GM12878 (cell line): ENCODE measurements at regions of chr4 and their contacts with region 1.

Region 1: DNA sequence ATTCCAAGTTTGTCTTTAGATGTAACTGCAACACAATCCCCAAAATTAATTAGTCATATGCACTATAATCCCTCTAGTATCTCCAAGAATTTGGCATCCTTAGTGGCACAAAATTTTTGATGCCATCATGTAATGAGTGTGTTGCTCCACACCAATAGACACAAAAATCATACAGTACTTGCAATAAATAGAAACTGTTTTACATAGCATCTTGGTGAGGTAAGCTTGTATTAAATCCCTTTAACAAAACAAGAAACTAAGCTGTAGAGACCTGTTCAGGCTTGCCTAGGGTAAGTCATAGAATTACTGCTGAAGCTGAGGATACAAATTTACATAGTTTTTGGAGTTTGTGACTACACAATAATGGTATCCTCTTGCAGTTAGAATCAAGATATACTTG is 64.5 kb upstream of the PRSS12 start:
- DNase-seq: no peak
- ATAC-seq: peak; percentile 79
- H3K4me3 ChIP-seq: no peak overlapping the region
- H3K27ac ChIP-seq: no peak overlapping the region
- H3K4me1 ChIP-seq: no peaks in the 10 kb centered on the region
- H3K27me3 ChIP-seq: no peaks in the 10 kb centered on the region
- CTCF ChIP-seq: no peak
- EP300 ChIP-seq: no peak
- POLR2A ChIP-seq: no peak
- RAD21 ChIP-seq: no peak

Region 2: DNA sequence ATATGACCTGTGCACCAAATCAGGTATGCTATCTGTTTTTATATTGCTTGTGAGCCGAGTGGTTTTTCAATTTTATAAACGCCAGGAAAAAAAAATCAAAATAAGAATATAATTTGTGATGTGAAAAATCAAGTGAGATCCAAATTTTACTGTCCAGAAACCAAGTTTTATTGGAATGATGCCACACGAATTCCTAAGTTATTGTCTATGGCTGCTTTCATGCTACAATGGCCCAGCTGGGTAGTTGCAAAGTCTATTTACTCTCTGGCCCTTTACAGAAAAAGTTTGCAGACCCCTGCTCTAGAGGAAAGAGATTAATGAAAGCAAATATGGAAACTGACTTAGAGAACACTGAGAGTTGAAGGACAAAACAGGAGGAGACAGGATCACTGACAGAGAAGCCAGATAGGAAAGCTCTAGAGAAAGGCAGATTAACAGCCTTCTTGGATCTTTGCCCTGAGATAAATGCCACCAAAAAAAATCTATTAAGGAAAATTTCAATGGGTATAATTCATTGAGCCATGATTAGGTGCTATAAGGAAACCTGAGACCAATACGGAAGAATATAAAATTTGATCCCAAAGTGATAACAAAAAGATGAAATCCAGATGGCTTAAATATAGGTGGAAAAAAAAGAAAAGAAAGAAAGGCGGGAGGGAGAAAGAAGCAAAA is 94.4 kb before region 1 on chr4:
- CTCF ChIA-PET with region 1: no interaction called
- POLR2A ChIA-PET with region 1: no interaction called
- RAD21 ChIA-PET with region 1: no interaction called
- SMC1A ChIA-PET with region 1: no interaction called
- in situ Hi-C with region 1: no loop called
- intact Hi-C with region 1: no loop called
- DNase-seq: no peak
- ATAC-seq: no peak
- H3K4me3 ChIP-seq: no peak overlapping the region
- H3K27ac ChIP-seq: no peak overlapping the region
- H3K4me1 ChIP-seq: no peaks in the 10 kb centered on the region
- H3K27me3 ChIP-seq: no peaks in the 10 kb centered on the region
- CTCF ChIP-seq: no peak
- EP300 ChIP-seq: no peak
- POLR2A ChIP-seq: no peak
- RAD21 ChIP-seq: no peak

Region 3: GRCh38 chr4:118398226-118399090 is 18.9 kb before region 1 on chr4:
- CTCF ChIA-PET with region 1: interaction called, 4 read pairs
- POLR2A ChIA-PET with region 1: interaction called, 6 read pairs
- RAD21 ChIA-PET with region 1: interaction called, 4 read pairs
- SMC1A ChIA-PET with region 1: interaction called, 17 read pairs
- in situ Hi-C with region 1: no loop called
- intact Hi-C with region 1: no loop called
- DNase-seq: peak; percentile 44
- ATAC-seq: peak; percentile 88
- H3K4me3 ChIP-seq: no peak overlapping the region
- H3K27ac ChIP-seq: no peak overlapping the region; the same call in 1 of the 2 replicates
- H3K4me1 ChIP-seq: peaks cover 5% of the 10 kb centered on the region
- H3K27me3 ChIP-seq: no peaks in the 10 kb centered on the region
- CTCF ChIP-seq: no peak
- EP300 ChIP-seq: no peak
- POLR2A ChIP-seq: no peak
- RAD21 ChIP-seq: no peak

Region 4: GRCh38 chr4:118941149-118941548 is 523.8 kb after region 1 on chr4:
- CTCF ChIA-PET with region 1: no interaction called
- POLR2A ChIA-PET with region 1: no interaction called
- RAD21 ChIA-PET with region 1: no interaction called
- SMC1A ChIA-PET with region 1: no interaction called
- in situ Hi-C with region 1: no loop called
- intact Hi-C with region 1: no loop called
- DNase-seq: no peak
- ATAC-seq: no peak
- H3K4me3 ChIP-seq: no peak overlapping the region
- H3K27ac ChIP-seq: no peak overlapping the region
- H3K4me1 ChIP-seq: no peaks in the 10 kb centered on the region
- H3K27me3 ChIP-seq: peaks cover 2 to 3% of the 10 kb centered on the region in 2 experiments; a peak in 2 of 4 replicates
- CTCF ChIP-seq: no peak
- EP300 ChIP-seq: no peak
- POLR2A ChIP-seq: no peak
- RAD21 ChIP-seq: no peak

Region 5: DNA sequence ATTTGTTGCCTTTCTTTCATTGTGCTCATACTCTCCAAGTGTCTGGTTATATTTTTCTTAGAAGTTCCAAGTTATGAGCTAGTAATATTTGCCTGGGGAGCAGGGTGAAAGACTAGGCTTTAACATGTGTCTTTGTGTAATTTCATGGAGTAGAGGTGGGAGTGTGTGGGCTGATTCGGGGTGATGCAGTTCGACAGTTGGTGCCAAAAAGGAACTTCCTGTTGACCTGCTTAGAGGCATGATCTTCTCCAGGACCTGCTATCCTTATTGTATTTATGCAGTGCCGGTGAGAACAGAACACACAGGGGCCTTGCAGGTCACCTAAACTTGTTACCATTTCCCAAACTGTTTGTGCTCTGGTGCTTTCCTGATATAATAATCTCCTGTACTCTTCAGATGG is 816.4 kb after region 1 on chr4:
- CTCF ChIA-PET with region 1: no interaction called
- POLR2A ChIA-PET with region 1: no interaction called
- RAD21 ChIA-PET with region 1: no interaction called
- SMC1A ChIA-PET with region 1: no interaction called
- in situ Hi-C with region 1: no loop called
- intact Hi-C with region 1: no loop called
- DNase-seq: no peak
- ATAC-seq: no peak
- H3K4me3 ChIP-seq: no peak overlapping the region
- H3K27ac ChIP-seq: no peak overlapping the region
- H3K4me1 ChIP-seq: peaks cover 11% of the 10 kb centered on the region; the same call in 1 of the 2 replicates
- H3K27me3 ChIP-seq: no peaks in the 10 kb centered on the region
- CTCF ChIP-seq: no peak
- EP300 ChIP-seq: no peak
- POLR2A ChIP-seq: no peak
- RAD21 ChIP-seq: no peak